ENCODE measurements at regions of chr18 and their contacts with region 1.

Region 1: GRCh38 chr18:55234366-55235093 is 275.3 kb upstream of the CCDC68 start:
- DNase-seq: peak; percentile 53
- ATAC-seq: peak; percentile 87
- H3K4me3 ChIP-seq: no peak overlapping the region
- H3K27ac ChIP-seq: no peak overlapping the region
- H3K4me1 ChIP-seq: peaks cover 19% of the 10 kb centered on the region
- H3K27me3 ChIP-seq: no peaks in the 10 kb centered on the region
- CTCF ChIP-seq: peak; percentile 81 to 95 (median 86)
- EP300 ChIP-seq: no peak
- POLR2A ChIP-seq: no peak
- RAD21 ChIP-seq: peak; percentile 99

Region 2: GRCh38 chr18:54983041-54983686 is 251.4 kb before region 1 on chr18:
- CTCF ChIA-PET with region 1: no interaction called
- POLR2A ChIA-PET with region 1: no interaction called
- RAD21 ChIA-PET with region 1: no interaction called
- SMC1A ChIA-PET with region 1: no interaction called
- in situ Hi-C with region 1: no loop called
- intact Hi-C with region 1: no loop called
- DNase-seq: no peak
- ATAC-seq: peak; percentile 86
- H3K4me3 ChIP-seq: no peak overlapping the region
- H3K27ac ChIP-seq: no peak overlapping the region
- H3K4me1 ChIP-seq: no peaks in the 10 kb centered on the region
- H3K27me3 ChIP-seq: no peaks in the 10 kb centered on the region
- CTCF ChIP-seq: peak; percentile 54 to 62 (median 54); a peak in 5 of 6 replicates
- EP300 ChIP-seq: no peak
- POLR2A ChIP-seq: no peak
- RAD21 ChIP-seq: peak; percentile 73

Region 3: GRCh38 chr18:55220523-55220922 is 14.0 kb before region 1 on chr18:
- CTCF ChIA-PET with region 1: interaction called, 14 read pairs
- POLR2A ChIA-PET with region 1: interaction called, 4 read pairs
- RAD21 ChIA-PET with region 1: interaction called, 10 read pairs
- SMC1A ChIA-PET with region 1: interaction called, 10 read pairs
- in situ Hi-C with region 1: no loop called
- intact Hi-C with region 1: no loop called
- DNase-seq: peak; percentile 33
- ATAC-seq: peak; percentile 77
- H3K4me3 ChIP-seq: no peak overlapping the region
- H3K27ac ChIP-seq: no peak overlapping the region; the same call in 1 of the 2 replicates
- H3K4me1 ChIP-seq: peaks cover 14% of the 10 kb centered on the region
- H3K27me3 ChIP-seq: no peaks in the 10 kb centered on the region
- CTCF ChIP-seq: no peak
- EP300 ChIP-seq: no peak
- POLR2A ChIP-seq: no peak
- RAD21 ChIP-seq: no peak

Region 4: GRCh38 chr18:55275039-55275901 is 40.7 kb after region 1 on chr18:
- CTCF ChIA-PET with region 1: interaction called, 153 read pairs
- POLR2A ChIA-PET with region 1: interaction called, 11 read pairs
- RAD21 ChIA-PET with region 1: interaction called, 60 read pairs
- SMC1A ChIA-PET with region 1: interaction called, 55 read pairs
- in situ Hi-C with region 1: no loop called
- intact Hi-C with region 1: loop called (anchors 1 kb)
- DNase-seq: no peak
- ATAC-seq: peak; percentile 81
- H3K4me3 ChIP-seq: no peak overlapping the region
- H3K27ac ChIP-seq: no peak overlapping the region
- H3K4me1 ChIP-seq: peaks cover 7% of the 10 kb centered on the region; the same call in 1 of the 2 replicates
- H3K27me3 ChIP-seq: no peaks in the 10 kb centered on the region
- CTCF ChIP-seq: peak; percentile 4 to 25 (median 22); a peak in 3 of 6 replicates
- EP300 ChIP-seq: no peak
- POLR2A ChIP-seq: no peak
- RAD21 ChIP-seq: peak; percentile 49

Region 5: DNA sequence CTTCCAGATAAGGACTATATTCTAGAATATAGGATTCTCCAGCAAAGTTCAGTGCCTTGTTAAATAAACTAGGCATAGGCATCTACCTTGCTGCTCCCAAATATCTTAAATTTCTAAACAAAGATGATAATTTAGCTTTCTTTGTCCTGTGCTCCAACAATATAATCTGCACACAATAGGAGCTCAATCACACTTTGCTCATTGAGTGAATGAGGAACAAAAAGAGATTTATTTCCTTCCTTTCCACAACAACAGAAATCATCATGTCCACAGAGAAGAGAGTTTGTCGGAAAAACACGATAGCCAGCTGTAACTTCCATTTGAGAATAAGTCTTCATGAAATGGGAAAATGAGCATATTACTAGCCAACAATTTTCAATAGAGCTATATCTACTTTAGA is 96.8 kb after region 1 on chr18:
- CTCF ChIA-PET with region 1: interaction called, 22 read pairs
- POLR2A ChIA-PET with region 1: no interaction called
- RAD21 ChIA-PET with region 1: interaction called, 10 read pairs
- SMC1A ChIA-PET with region 1: interaction called, 26 read pairs
- in situ Hi-C with region 1: no loop called
- intact Hi-C with region 1: no loop called
- DNase-seq: no peak
- ATAC-seq: no peak
- H3K4me3 ChIP-seq: no peak overlapping the region
- H3K27ac ChIP-seq: no peak overlapping the region
- H3K4me1 ChIP-seq: peaks cover 10% of the 10 kb centered on the region
- H3K27me3 ChIP-seq: no peaks in the 10 kb centered on the region
- CTCF ChIP-seq: no peak
- EP300 ChIP-seq: no peak
- POLR2A ChIP-seq: no peak
- RAD21 ChIP-seq: no peak

Region 6: DNA sequence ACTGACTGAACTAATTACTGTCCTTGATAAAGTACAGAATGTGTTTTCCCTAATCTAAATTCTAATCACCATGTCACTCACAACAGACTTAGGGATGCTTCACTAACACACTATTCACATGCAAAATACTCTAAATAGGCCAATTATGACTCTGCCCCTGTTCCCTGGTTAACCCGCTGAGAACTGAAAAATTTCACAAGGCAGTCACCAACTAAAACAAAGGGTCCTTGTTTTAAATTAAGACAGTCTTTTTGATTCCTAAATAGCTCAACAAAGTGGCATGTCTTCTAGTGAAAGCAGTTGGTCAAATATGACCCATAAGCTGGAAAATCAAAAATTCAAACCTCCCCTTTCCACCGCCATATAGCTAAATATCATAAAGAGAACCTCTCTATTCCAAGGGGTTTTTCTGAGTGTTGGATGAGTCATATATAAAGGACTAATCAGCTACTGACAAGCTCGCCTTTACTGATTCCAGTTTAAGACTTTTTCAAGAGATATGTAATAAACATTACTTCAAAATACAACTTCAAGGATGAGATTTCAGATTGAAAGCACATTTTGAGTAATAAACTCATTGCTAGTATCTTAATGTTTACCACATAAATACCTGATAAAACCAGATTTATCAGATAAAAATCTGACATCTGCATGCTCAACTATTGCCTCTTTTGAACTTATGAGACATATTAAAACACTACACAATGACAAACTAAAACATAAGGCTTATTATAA is 117.6 kb after region 1 on chr18:
- CTCF ChIA-PET with region 1: interaction called, 21 read pairs
- POLR2A ChIA-PET with region 1: interaction called, 3 read pairs
- RAD21 ChIA-PET with region 1: no interaction called
- SMC1A ChIA-PET with region 1: interaction called, 8 read pairs
- in situ Hi-C with region 1: no loop called
- intact Hi-C with region 1: no loop called
- DNase-seq: no peak
- ATAC-seq: peak; percentile 81
- H3K4me3 ChIP-seq: no peak overlapping the region
- H3K27ac ChIP-seq: no peak overlapping the region
- H3K4me1 ChIP-seq: no peaks in the 10 kb centered on the region
- H3K27me3 ChIP-seq: no peaks in the 10 kb centered on the region; a peak in 2 of 4 replicates
- CTCF ChIP-seq: no peak
- EP300 ChIP-seq: no peak
- POLR2A ChIP-seq: no peak
- RAD21 ChIP-seq: no peak

Region 7: DNA sequence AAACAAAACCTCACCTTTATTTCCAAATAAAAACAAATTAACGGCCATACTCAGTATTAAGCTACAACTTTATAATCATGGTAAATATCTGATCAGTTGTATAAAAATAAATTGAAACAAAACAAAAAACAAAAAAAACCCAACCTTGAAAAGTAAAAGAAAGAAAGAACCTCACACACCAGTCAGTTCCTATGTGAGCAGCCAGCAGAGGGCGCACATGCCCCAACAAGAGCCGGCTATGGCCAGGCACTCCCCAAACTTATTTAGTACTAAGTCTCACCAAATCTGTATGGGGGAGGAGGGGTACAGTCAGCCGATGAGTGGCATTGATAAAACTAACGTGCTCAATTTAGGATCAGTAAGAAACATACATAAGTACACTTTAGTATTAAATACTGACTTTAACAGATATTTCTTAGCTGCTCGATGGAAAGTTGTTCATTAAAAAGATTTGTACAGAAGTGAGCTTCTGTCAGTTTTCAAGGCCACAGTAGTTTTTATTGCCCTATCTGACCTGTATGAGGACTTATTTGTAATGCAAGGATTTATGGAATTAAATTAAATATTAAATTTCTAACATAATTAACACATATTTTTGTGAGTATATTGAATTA is 180.8 kb after region 1 on chr18:
- CTCF ChIA-PET with region 1: interaction called, 18 read pairs
- POLR2A ChIA-PET with region 1: no interaction called
- RAD21 ChIA-PET with region 1: interaction called, 10 read pairs
- SMC1A ChIA-PET with region 1: interaction called, 27 read pairs
- in situ Hi-C with region 1: no loop called
- intact Hi-C with region 1: loop called (anchors 1 kb)
- DNase-seq: peak; percentile 9
- ATAC-seq: peak; percentile 99
- H3K4me3 ChIP-seq: no peak overlapping the region
- H3K27ac ChIP-seq: no peak overlapping the region
- H3K4me1 ChIP-seq: peaks cover 1% of the 10 kb centered on the region; the same call in 1 of the 2 replicates
- H3K27me3 ChIP-seq: no peaks in the 10 kb centered on the region
- CTCF ChIP-seq: peak; percentile 83 to 87 (median 85)
- EP300 ChIP-seq: no peak
- POLR2A ChIP-seq: no peak
- RAD21 ChIP-seq: peak; percentile 94

Region 8: DNA sequence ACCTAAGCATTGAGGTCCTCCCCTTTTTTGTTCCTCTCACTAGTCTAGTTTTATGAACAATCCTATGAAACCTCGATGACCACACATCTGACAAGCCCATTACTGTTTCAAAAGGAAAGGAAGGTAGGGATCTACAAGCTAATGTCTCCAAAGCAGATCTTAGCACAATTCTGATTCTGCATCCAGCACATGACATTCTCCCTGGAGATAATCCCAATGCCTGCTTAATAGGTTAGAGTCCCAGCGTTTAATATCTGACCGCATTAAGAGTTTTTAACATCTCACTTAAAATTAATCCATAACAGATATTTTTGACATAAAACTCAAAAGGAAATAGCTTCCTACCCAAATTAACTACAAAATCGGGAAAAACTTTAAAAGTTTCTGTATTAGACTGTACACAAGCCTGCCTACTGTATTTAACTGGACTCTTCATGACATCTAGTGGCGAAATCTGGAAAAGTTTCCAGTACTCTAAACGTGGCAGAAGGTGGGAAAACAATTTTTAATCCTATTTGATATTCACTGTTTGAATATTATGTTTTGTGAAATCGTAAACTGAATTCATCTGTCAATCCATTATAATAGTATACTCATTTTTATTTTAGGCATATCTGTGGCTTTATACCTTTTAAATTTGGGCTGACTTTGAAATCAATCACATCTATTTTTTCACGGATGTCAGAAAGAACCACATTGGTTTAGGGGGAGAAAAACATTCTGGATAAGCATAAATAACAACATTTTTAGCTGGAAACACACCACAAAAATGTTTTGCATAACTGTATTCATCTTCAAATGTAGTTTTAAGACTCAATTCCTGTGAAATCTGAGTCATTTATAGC is 1341.5 kb after region 1 on chr18:
- CTCF ChIA-PET with region 1: interaction called, 3 read pairs
- POLR2A ChIA-PET with region 1: no interaction called
- RAD21 ChIA-PET with region 1: interaction called, 3 read pairs
- SMC1A ChIA-PET with region 1: interaction called, 4 read pairs
- in situ Hi-C with region 1: loop called (anchors 10 kb)
- intact Hi-C with region 1: loop called (anchors 1 kb)
- DNase-seq: no peak
- ATAC-seq: peak; percentile 90
- H3K4me3 ChIP-seq: no peak overlapping the region
- H3K27ac ChIP-seq: no peak overlapping the region
- H3K4me1 ChIP-seq: no peaks in the 10 kb centered on the region
- H3K27me3 ChIP-seq: no peaks in the 10 kb centered on the region; a peak in 1 of 4 replicates
- CTCF ChIP-seq: peak; percentile 44 to 57 (median 49); a peak in 5 of 6 replicates
- EP300 ChIP-seq: no peak
- POLR2A ChIP-seq: no peak
- RAD21 ChIP-seq: peak; percentile 89